ENCODE measurements at regions of chr17 and their contacts with region 1.

Region 1: DNA sequence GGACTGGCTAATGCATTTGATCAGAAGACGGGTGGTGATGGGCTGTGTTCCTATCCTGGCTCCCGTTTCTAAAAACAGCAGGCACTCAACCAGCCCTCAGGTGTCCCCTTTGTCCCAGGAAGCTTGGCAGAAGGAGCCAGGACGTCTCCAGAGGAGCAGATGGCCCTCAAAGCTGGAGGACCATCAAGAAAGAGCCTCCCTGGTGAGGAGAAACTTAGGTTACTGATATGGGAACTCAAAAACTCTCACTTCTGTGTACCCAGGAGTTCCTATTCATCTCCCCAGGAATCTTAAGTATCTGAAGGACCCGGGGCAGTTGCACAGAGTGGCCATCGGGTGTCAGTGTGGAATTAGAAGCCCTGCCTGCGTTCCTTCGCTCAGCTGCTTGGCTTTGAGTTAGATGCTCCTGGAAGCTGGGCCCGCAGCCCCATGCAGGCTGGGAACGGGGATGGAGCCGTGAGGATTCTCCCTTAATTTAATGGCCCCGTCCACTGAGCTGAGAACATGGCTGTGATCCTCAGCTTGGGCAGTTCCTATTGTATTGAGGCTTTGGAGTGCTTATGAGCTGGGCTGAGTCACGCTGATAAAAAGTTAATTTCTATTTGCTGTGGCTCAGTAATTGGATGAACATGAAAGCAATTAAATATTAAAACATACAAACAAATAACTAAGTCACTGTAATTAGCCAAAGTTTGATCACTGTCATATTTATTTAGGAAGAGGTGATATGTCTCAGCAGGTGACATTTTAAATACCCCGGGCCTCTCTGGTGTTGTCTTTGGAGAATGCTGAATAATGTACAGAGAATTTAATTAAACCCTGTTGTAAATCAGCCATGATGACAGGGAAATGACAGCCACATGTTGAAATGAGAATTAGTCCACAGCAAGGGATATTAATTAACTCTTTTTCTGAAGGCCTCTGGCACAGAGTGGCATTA is 402.1 kb downstream of the SEC14L1 start:
- DNase-seq: peak; percentile 73 to 86
- ATAC-seq: peak; percentile 93 to 99 (median 95)
- H3K4me3 ChIP-seq: no peak overlapping the region
- H3K27ac ChIP-seq: no peak overlapping the region
- H3K4me1 ChIP-seq: no peaks in the 10 kb centered on the region
- H3K27me3 ChIP-seq: peaks cover 0 to 9% (median 0%) of the 10 kb centered on the region in 3 donors
- CTCF ChIP-seq: peak; percentile 90

Region 2: GRCh38 chr17:77372444-77373298 is 170.2 kb before region 1 on chr17:
- intact Hi-C with region 1: no loop called
- DNase-seq: peak; percentile 83 to 90
- ATAC-seq: peak; percentile 44 to 53 (median 48)
- H3K4me3 ChIP-seq: peak overlapping the region; percentile 79
- H3K27ac ChIP-seq: peak overlapping the region; percentile 83
- H3K4me1 ChIP-seq: peaks cover 51% of the 10 kb centered on the region
- H3K27me3 ChIP-seq: no peaks in the 10 kb centered on the region
- CTCF ChIP-seq: no peak

Region 3: GRCh38 chr17:77602062-77602746 is 59.4 kb after region 1 on chr17:
- intact Hi-C with region 1: loop called in 1 of 2 experiments (anchors 5 kb)
- DNase-seq: peak; percentile 79 to 92
- ATAC-seq: peak; percentile 94 to 97 (median 96)
- H3K4me3 ChIP-seq: peak overlapping the region; percentile 36
- H3K27ac ChIP-seq: peak overlapping the region; percentile 88
- H3K4me1 ChIP-seq: peaks cover 32% of the 10 kb centered on the region
- H3K27me3 ChIP-seq: no peaks in the 10 kb centered on the region
- CTCF ChIP-seq: no peak

Region 4: GRCh38 chr17:77645072-77646045 is 102.5 kb after region 1 on chr17:
- intact Hi-C with region 1: loop called in 1 of 2 experiments (anchors 10 kb)
- DNase-seq: peak; percentile 22 to 58
- ATAC-seq: peak; percentile 53 to 88 (median 77)
- H3K4me3 ChIP-seq: peak overlapping the region; percentile 4
- H3K27ac ChIP-seq: no peak overlapping the region
- H3K4me1 ChIP-seq: no peaks in the 10 kb centered on the region
- H3K27me3 ChIP-seq: no peaks in the 10 kb centered on the region
- CTCF ChIP-seq: peak; percentile 15

Region 5: DNA sequence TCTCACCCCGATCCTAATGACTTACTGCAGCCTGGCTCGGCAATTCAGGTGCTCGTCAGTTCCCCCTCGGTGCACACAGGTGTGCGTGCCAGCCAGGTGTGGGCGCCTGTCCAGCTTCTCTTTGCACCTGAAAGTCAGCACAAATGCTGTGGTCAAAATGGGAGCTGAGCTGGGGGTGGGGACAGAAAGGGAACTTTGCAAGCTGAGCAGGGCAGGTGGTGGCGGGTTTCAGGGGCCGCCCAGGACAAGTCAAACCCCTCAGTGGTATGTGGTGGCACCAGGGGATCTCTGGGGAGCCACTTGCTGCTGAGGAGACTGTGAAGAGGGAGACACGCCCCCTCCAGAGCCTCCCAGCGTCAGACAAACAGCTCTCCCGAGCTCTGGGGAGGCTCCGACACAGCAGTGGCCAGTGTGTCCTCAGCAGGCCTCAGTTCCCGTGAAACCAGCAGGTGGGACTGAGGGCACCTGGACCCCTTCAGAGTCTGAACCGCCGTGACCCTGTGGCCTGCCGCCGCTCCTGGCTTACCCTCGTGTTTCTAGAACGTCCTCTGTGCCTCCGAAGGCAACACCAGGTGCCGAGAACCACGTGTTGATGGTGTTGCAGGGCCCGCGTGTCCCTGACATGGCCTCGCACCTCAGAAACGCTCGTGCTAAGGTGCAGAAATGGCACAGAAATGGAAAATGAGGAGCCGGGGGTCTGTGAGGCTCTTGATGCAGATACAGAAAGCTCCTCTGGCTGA is 182.2 kb after region 1 on chr17:
- intact Hi-C with region 1: loop called (anchors 5 to 10 kb)
- DNase-seq: no peak
- ATAC-seq: no peak
- H3K4me3 ChIP-seq: no peak overlapping the region
- H3K27ac ChIP-seq: no peak overlapping the region
- H3K4me1 ChIP-seq: no peaks in the 10 kb centered on the region
- H3K27me3 ChIP-seq: peaks cover 0 to 11% (median 0%) of the 10 kb centered on the region in 3 donors
- CTCF ChIP-seq: no peak

Region 6: DNA sequence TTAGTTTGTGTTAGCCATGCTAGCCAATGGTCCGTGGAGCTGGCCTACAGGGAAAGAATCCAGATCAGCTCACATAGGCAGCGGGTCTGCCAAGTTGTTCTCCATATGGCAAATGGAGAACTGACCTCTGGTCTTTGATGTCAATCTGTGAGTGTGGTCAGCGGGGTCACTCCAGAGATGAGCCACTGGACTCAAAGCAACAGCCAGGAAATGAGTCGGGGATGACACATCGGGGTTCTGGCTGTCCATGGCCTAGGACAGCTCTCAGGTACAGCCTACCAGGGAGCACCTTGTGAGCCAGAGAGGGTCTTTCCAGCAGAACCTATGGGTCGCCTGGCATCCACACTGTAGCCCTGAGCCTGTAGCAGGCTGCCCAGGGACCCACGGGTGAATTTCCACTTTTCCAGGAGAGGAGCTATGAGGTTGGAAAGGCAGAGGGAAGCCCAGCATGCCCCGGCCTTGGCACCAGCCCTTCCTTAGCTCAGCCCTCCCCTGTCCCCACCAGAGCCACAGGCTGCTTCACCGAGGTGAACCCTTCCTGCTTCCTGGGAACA is 212.7 kb after region 1 on chr17:
- intact Hi-C with region 1: no loop called
- DNase-seq: no peak
- ATAC-seq: no peak
- H3K4me3 ChIP-seq: no peak overlapping the region
- H3K27ac ChIP-seq: no peak overlapping the region
- H3K4me1 ChIP-seq: no peaks in the 10 kb centered on the region
- H3K27me3 ChIP-seq: no peaks in the 10 kb centered on the region
- CTCF ChIP-seq: no peak

Region 7: DNA sequence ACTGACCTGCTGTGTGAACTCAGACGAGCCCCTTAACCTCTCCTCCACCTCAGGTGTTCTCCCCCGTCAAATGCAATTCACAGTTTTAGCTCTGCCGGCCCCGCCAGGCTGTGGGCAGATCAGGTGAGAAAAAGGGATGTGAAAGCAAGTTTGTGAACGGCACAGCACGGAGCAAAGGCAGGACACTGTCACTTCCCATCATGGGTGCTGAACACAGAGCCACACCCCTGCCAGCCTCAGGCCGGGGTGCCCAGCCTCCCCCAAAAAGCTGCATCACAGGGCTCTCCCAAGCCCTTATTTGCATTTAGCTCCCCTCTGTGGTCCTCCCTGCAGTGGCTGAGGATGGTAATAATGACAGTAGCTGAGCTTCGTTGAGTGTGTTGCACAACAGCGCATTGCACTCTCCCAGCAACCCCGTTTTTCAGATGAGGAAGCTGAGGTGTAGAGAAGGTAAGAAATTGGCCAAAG is 326.9 kb after region 1 on chr17:
- intact Hi-C with region 1: no loop called
- DNase-seq: peak in 1 of 2 donors; percentile 63
- ATAC-seq: no peak
- H3K4me3 ChIP-seq: no peak overlapping the region
- H3K27ac ChIP-seq: no peak overlapping the region
- H3K4me1 ChIP-seq: no peaks in the 10 kb centered on the region
- H3K27me3 ChIP-seq: peaks cover 0 to 21% (median 0%) of the 10 kb centered on the region in 3 donors
- CTCF ChIP-seq: no peak

Region 8: GRCh38 chr17:78013683-78014467 is 471.1 kb after region 1 on chr17:
- intact Hi-C with region 1: loop called (anchors 2 to 5 kb)
- DNase-seq: no peak
- ATAC-seq: peak; percentile 60 to 75 (median 70)
- H3K4me3 ChIP-seq: no peak overlapping the region
- H3K27ac ChIP-seq: peak overlapping the region; percentile 17
- H3K4me1 ChIP-seq: peaks cover 3% of the 10 kb centered on the region
- H3K27me3 ChIP-seq: no peaks in the 10 kb centered on the region
- CTCF ChIP-seq: peak; percentile 86